Activated T-helper 1 cell treated with anti-CD3 and anti-CD28 coated beads, Interleukin-12 subunit alpha, Interleukin-12 subunit beta, Interleukin-2, Interleukin-4 antibody, amounts not matched to agents 30 ng/mL and 10 ng/mL and 1 ng/mL, durations not matched to agents 14 hours and 24 hours and 36 hours (primary cell): ENCODE measurements at regions of chr11 and their contacts with region 1.

Region 1: DNA sequence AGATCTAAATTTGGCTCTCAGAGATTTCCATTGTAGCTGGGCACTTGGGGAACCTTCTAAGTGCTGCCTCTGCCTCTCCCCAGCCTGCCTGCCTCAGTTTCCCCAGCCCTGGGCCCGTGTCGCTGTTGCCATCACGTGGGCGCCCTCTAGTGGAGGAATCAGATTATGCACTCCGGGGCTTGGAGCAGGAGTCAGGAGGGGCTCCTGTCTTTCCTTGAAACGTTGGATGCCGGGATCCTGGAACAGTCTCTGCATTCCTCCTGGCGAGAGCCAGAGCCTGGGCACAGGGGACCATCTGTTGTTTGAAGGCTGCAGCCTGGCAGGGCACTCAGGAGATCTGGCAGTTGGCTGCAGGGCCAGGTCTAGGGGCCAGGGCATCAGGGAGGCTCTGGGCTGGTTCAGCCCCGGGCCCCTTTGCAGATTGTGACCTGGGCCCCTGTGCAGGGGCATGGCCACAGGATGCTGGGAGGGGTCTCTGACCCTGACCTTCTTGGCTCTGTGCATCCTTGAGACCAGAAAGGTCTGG is 71.6 kb downstream of the LRP5 start:
- DNase-seq: peak; percentile 45
- H3K4me3 Mint-ChIP-seq: no peak overlapping the region
- H3K27ac Mint-ChIP-seq: no peak overlapping the region
- H3K4me1 Mint-ChIP-seq: peaks cover 29% of the 10 kb centered on the region
- H3K27me3 Mint-ChIP-seq: no peaks in the 10 kb centered on the region

Region 2: GRCh38 chr11:68312117-68312779 is 71.8 kb before region 1 on chr11 and contains the start of gene LRP5:
- intact Hi-C with region 1: loop called (anchors 5 kb)
- DNase-seq: no peak
- H3K4me3 Mint-ChIP-seq: peak within 1 kb of the TSS; percentile 87
- H3K27ac Mint-ChIP-seq: peak within 1 kb of the TSS; percentile 79
- H3K4me1 Mint-ChIP-seq: peaks cover 48% of the 10 kb centered on the region
- H3K27me3 Mint-ChIP-seq: peaks cover 7% of the 10 kb centered on the region
- total RNA-seq, gene LRP5: 21.4 and 23.9 TPM in 2 replicates

Region 3: GRCh38 chr11:68598816-68599653 is 215.0 kb after region 1 on chr11:
- intact Hi-C with region 1: no loop called
- DNase-seq: no peak
- H3K4me3 Mint-ChIP-seq: no peak overlapping the region
- H3K27ac Mint-ChIP-seq: peak overlapping the region; percentile 6
- H3K4me1 Mint-ChIP-seq: peaks cover 10% of the 10 kb centered on the region
- H3K27me3 Mint-ChIP-seq: no peaks in the 10 kb centered on the region